Breast epithelium (tissue), 4 donors: ENCODE measurements at regions of chr19 and their contacts with region 1.

Region 1: GRCh38 chr19:8252922-8253589 is 43.9 kb downstream of the CERS4 start:
- DNase-seq: peak; percentile 71 to 81
- H3K4me3 ChIP-seq: no peak overlapping the region
- H3K27ac ChIP-seq: no peak overlapping the region
- H3K4me1 ChIP-seq: no peaks in the 10 kb centered on the region
- H3K27me3 ChIP-seq: no peaks in the 10 kb centered on the region
- CTCF ChIP-seq: peak; percentile 93 to 97 (median 97)
- POLR2A ChIP-seq: no peak

Region 2: DNA sequence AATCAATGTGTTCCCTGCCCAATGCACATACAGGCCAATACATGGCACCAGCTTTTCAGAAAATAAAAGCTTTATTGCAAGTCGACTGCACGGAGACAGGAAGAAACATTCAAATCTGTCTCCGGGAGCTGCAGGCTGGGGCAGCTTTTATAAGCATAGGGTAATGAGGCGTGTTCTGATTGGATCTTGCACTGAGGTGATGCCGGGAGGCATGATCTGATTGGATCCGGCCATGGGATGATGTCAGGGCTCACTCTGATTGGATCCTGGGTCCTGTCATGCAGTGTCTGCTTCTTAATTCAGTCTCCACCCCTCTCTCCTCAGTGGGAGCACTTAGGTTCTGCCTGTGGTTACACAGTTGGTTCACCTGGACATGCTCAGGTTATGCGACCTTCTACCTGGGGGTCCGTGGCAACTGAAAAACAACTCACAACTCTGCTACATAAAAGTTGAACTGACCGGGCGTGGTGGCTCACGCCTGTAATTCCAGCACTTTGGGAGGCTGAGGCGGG is 91.9 kb before region 1 on chr19:
- intact Hi-C with region 1: loop called (anchors 10 kb)
- DNase-seq: no peak
- H3K4me3 ChIP-seq: no peak overlapping the region
- H3K27ac ChIP-seq: no peak overlapping the region
- H3K4me1 ChIP-seq: no peaks in the 10 kb centered on the region
- H3K27me3 ChIP-seq: no peaks in the 10 kb centered on the region
- CTCF ChIP-seq: no peak
- POLR2A ChIP-seq: no peak